ENCODE measurements at regions of chr20 and their contacts with region 1.

Region 1: GRCh38 chr20:3059489-3059888 is 11.9 kb upstream of the OXT start:
- DNase-seq: no peak
- H3K4me3 ChIP-seq: no peak overlapping the region
- H3K27ac ChIP-seq: no peak overlapping the region
- H3K4me1 ChIP-seq: no peaks in the 10 kb centered on the region
- H3K27me3 ChIP-seq: no peaks in the 10 kb centered on the region
- CTCF ChIP-seq: no peak

Region 2: GRCh38 chr20:2752567-2753460 is 306.7 kb before region 1 on chr20:
- intact Hi-C with region 1: no loop called
- DNase-seq: no peak
- H3K4me3 ChIP-seq: peak overlapping the region; percentile 32 to 50
- H3K27ac ChIP-seq: no peak overlapping the region
- H3K4me1 ChIP-seq: peaks cover 0 to 35% (median 28%) of the 10 kb centered on the region in 4 donors
- H3K27me3 ChIP-seq: peaks cover 0 to 82% of the 10 kb centered on the region in 2 donors
- CTCF ChIP-seq: peak; percentile 34 to 52

Region 3: GRCh38 chr20:3000852-3001523 is 58.5 kb before region 1 on chr20:
- intact Hi-C with region 1: no loop called
- DNase-seq: no peak
- H3K4me3 ChIP-seq: no peak overlapping the region
- H3K27ac ChIP-seq: no peak overlapping the region
- H3K4me1 ChIP-seq: no peaks in the 10 kb centered on the region
- H3K27me3 ChIP-seq: no peaks in the 10 kb centered on the region
- CTCF ChIP-seq: peak; percentile 29 to 44

Region 4: DNA sequence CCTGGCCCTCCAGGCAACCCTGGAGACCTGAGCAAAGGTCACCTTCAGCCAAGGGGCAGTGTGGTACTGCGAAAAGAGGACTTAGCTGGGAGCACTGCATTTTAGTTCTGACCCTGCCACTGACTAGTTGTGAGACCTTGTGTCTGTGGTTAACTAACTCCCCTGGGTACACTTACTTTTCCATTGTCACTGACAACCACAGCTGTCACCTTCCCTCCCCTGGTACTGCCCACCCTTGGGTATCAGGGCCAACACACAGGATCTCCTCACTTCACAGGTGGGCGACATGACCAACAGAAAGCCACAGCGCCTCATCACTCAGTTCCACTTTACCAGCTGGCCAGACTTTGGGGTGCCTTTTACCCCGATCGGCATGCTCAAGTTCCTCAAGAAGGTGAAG is 37.7 kb before region 1 on chr20:
- intact Hi-C with region 1: no loop called
- DNase-seq: no peak
- H3K4me3 ChIP-seq: no peak overlapping the region
- H3K27ac ChIP-seq: no peak overlapping the region
- H3K4me1 ChIP-seq: no peaks in the 10 kb centered on the region
- H3K27me3 ChIP-seq: no peaks in the 10 kb centered on the region
- CTCF ChIP-seq: no peak

Region 5: GRCh38 chr20:3109350-3110302 is 50.1 kb after region 1 on chr20:
- intact Hi-C with region 1: loop called (anchors 5 kb)
- DNase-seq: no peak
- H3K4me3 ChIP-seq: no peak overlapping the region
- H3K27ac ChIP-seq: no peak overlapping the region
- H3K4me1 ChIP-seq: no peaks in the 10 kb centered on the region
- H3K27me3 ChIP-seq: no peaks in the 10 kb centered on the region
- CTCF ChIP-seq: no peak

Measured in tibial artery (tissue), 4 donors.